ENCODE measurements at regions of chr2 and their contacts with region 1.

Region 1: GRCh38 chr2:201231781-201232466 is 28.4 kb upstream of the CASP8 start:
- DNase-seq: peak; percentile 85 to 93 (median 89)
- H3K4me3 ChIP-seq: peak overlapping the region; percentile 33
- H3K4me3 Mint-ChIP-seq: peak overlapping the region; percentile 74 to 99 (median 96)
- H3K27ac ChIP-seq: peak overlapping the region; percentile 13
- H3K27ac Mint-ChIP-seq: peak overlapping the region; percentile 49 to 89 (median 84)
- H3K4me1 ChIP-seq: peaks cover 49% of the 10 kb centered on the region
- H3K4me1 Mint-ChIP-seq: peaks cover 44 to 54% (median 47%) of the 10 kb centered on the region in 3 donors
- H3K27me3 ChIP-seq: no peaks in the 10 kb centered on the region
- H3K27me3 Mint-ChIP-seq: no peaks in the 10 kb centered on the region

Region 2: DNA sequence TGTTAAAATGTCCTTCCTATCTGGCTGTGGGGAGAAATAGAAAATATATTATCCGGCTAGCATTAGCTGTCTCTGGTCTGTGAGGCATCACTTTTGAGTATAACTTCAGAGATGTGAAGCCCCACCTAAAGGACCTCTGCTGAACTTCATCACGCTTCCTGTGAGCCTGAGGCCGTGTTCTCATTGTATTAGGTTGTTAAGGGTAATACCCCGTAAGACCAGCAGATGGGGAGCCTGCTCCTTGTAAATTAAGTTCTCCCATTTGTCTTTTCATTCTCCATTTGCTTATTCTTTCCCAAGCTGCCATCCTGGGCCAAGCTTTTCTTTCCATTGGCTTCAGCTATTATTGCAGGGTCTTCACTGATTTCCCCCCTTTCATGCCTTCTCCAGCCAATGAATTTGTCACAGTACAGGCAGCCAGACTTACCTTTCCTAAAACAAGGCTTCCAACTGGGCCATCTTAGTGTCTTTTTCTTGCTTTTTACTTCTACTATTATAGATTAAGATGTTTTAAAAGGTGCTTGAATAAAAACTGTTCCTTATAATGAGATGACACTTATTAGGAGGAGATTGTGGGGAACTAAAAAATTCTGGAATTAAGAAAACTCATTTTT is 330.4 kb before region 1 on chr2:
- CTCF ChIA-PET with region 1: interaction called, 11 read pairs
- POLR2A ChIA-PET with region 1: interaction called, 3 read pairs
- DNase-seq: peak; percentile 58 to 84 (median 71)
- H3K4me3 ChIP-seq: no peak overlapping the region
- H3K4me3 Mint-ChIP-seq: no peak overlapping the region
- H3K27ac ChIP-seq: no peak overlapping the region
- H3K27ac Mint-ChIP-seq: peak overlapping the region; percentile 1 to 92 (median 55)
- H3K4me1 ChIP-seq: no peaks in the 10 kb centered on the region
- H3K4me1 Mint-ChIP-seq: peaks cover 3 to 14% (median 9%) of the 10 kb centered on the region in 3 donors
- H3K27me3 ChIP-seq: no peaks in the 10 kb centered on the region
- H3K27me3 Mint-ChIP-seq: no peaks in the 10 kb centered on the region

Region 3: GRCh38 chr2:201100497-201100896 is 131.4 kb before region 1 on chr2:
- CTCF ChIA-PET with region 1: no interaction called
- POLR2A ChIA-PET with region 1: no interaction called
- DNase-seq: no peak
- H3K4me3 ChIP-seq: no peak overlapping the region
- H3K4me3 Mint-ChIP-seq: no peak overlapping the region
- H3K27ac ChIP-seq: no peak overlapping the region
- H3K27ac Mint-ChIP-seq: no peak overlapping the region
- H3K4me1 ChIP-seq: no peaks in the 10 kb centered on the region
- H3K4me1 Mint-ChIP-seq: no peaks in the 10 kb centered on the region
- H3K27me3 ChIP-seq: no peaks in the 10 kb centered on the region
- H3K27me3 Mint-ChIP-seq: no peaks in the 10 kb centered on the region

Region 4: GRCh38 chr2:201176081-201176481 is 55.8 kb before region 1 on chr2:
- CTCF ChIA-PET with region 1: interaction called, 74 read pairs
- POLR2A ChIA-PET with region 1: no interaction called
- DNase-seq: no peak
- H3K4me3 ChIP-seq: no peak overlapping the region
- H3K4me3 Mint-ChIP-seq: no peak overlapping the region
- H3K27ac ChIP-seq: no peak overlapping the region
- H3K27ac Mint-ChIP-seq: peak overlapping the region in 1 of 8 donors; percentile 68
- H3K4me1 ChIP-seq: peaks cover 5% of the 10 kb centered on the region
- H3K4me1 Mint-ChIP-seq: peaks cover 12 to 15% (median 13%) of the 10 kb centered on the region in 3 donors
- H3K27me3 ChIP-seq: no peaks in the 10 kb centered on the region
- H3K27me3 Mint-ChIP-seq: no peaks in the 10 kb centered on the region

Region 5: DNA sequence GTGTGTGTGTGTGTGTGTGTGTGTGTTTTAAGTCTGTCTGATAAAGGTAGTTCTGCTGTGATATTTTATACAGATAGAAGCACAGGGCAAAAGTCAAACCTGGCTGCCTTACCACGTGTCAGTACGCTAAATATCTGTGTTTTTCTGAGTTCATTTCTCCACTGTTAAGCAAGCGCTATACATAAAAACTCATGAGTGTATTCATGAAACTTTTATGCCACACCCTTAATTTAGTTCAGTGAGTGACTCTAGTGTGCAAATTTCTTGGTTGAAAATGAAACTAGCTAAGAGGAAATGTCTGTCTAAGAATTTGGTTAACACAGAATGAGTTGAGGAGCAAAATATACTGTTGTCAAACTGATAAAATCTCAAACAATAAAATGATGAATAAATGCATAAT is 37.8 kb before region 1 on chr2:
- CTCF ChIA-PET with region 1: interaction called, 58 read pairs
- POLR2A ChIA-PET with region 1: interaction called, 7 read pairs
- DNase-seq: peak in 2 of 5 donors; percentile 19 to 20
- H3K4me3 ChIP-seq: peak overlapping the region; percentile 14
- H3K4me3 Mint-ChIP-seq: peak overlapping the region; percentile 5 to 81 (median 77)
- H3K27ac ChIP-seq: no peak overlapping the region
- H3K27ac Mint-ChIP-seq: peak overlapping the region; percentile 53 to 93 (median 90)
- H3K4me1 ChIP-seq: peaks cover 68% of the 10 kb centered on the region
- H3K4me1 Mint-ChIP-seq: peaks cover 51 to 74% (median 66%) of the 10 kb centered on the region in 3 donors
- H3K27me3 ChIP-seq: no peaks in the 10 kb centered on the region
- H3K27me3 Mint-ChIP-seq: no peaks in the 10 kb centered on the region

Region 6: GRCh38 chr2:201220102-201220570 is 11.8 kb before region 1 on chr2:
- CTCF ChIA-PET with region 1: interaction called, 19 read pairs
- POLR2A ChIA-PET with region 1: no interaction called
- DNase-seq: no peak
- H3K4me3 ChIP-seq: no peak overlapping the region
- H3K4me3 Mint-ChIP-seq: no peak overlapping the region
- H3K27ac ChIP-seq: no peak overlapping the region
- H3K27ac Mint-ChIP-seq: peak overlapping the region in 2 of 8 donors; percentile 39 to 43
- H3K4me1 ChIP-seq: peaks cover 21% of the 10 kb centered on the region
- H3K4me1 Mint-ChIP-seq: peaks cover 15 to 20% (median 15%) of the 10 kb centered on the region in 3 donors
- H3K27me3 ChIP-seq: no peaks in the 10 kb centered on the region
- H3K27me3 Mint-ChIP-seq: peaks cover 0 to 1% of the 10 kb centered on the region in 2 donors

Region 7: GRCh38 chr2:201285499-201285898 is 53.6 kb after region 1 on chr2:
- CTCF ChIA-PET with region 1: interaction called, 19 read pairs
- POLR2A ChIA-PET with region 1: no interaction called
- DNase-seq: no peak
- H3K4me3 ChIP-seq: no peak overlapping the region
- H3K4me3 Mint-ChIP-seq: peak overlapping the region in 1 of 7 donors; percentile 6
- H3K27ac ChIP-seq: no peak overlapping the region
- H3K27ac Mint-ChIP-seq: peak overlapping the region in 6 of 8 donors; percentile 11 to 62 (median 42)
- H3K4me1 ChIP-seq: no peaks in the 10 kb centered on the region
- H3K4me1 Mint-ChIP-seq: peaks cover 32 to 58% (median 35%) of the 10 kb centered on the region in 3 donors
- H3K27me3 ChIP-seq: no peaks in the 10 kb centered on the region
- H3K27me3 Mint-ChIP-seq: no peaks in the 10 kb centered on the region

Region 8: DNA sequence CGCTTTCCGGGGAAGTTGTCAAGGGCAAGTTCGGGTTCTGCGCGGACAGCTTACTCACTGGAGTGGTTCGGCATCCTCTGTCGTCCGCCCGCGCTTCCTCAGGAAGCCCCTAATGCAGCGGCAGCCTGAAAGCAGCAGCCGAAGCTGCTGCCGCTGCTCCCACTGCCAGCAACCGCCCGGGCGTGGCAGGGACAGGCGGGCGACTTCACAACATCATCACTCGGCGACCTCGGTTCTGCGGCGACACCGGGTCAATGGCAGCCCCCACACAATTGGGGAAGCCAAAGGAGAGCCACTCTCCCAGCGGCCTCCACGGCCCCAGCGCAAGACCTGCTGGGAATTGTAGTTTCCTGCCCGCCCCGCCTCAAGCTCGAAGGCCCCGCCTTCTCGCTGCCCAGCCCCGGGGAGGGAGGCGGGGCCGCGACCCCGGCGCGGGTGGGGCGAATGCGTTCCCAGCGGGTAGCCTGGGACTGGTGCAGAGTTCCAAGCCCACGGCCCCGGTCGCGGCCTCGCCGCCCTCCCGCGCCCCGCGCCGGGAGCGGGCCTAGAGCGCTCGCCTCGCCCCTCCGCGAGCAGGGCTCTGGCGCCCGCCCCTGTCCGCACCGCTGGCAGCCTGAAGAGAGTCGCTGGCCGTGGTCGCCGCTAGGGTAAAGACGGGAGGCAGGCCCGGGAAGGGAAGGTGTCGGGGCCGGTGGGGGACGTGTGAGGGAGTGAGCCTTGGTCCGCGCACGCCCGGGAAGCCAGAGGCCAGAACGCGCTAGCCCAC is 219.6 kb after region 1 on chr2 and contains the starts of genes STRADB and TRAK2:
- CTCF ChIA-PET with region 1: interaction called, 11 read pairs
- POLR2A ChIA-PET with region 1: interaction called, 4 read pairs
- DNase-seq: peak; percentile 94 to 97 (median 95)
- H3K4me3 ChIP-seq: peak within 1 kb of the TSS; percentile 99
- H3K4me3 Mint-ChIP-seq: peak within 1 kb of the TSS; percentile 96 to 100 (median 97)
- H3K27ac ChIP-seq: peak within 1 kb of the TSS; percentile 92
- H3K27ac Mint-ChIP-seq: peak within 1 kb of the TSS; percentile 92 to 99 (median 96)
- H3K4me1 ChIP-seq: peaks cover 47% of the 10 kb centered on the region
- H3K4me1 Mint-ChIP-seq: peaks cover 44 to 58% (median 56%) of the 10 kb centered on the region in 3 donors
- H3K27me3 ChIP-seq: no peaks in the 10 kb centered on the region
- H3K27me3 Mint-ChIP-seq: no peaks in the 10 kb centered on the region
- total RNA-seq, gene STRADB: 22.3 to 27.7 TPM
- total RNA-seq, gene TRAK2: 24.9 to 26.0 TPM

Measured in CD8-positive, alpha-beta memory T cell (primary cell).